Activated naive CD4-positive, alpha-beta T cell treated with anti-CD3 and anti-CD28 coated beads for 36 hours (primary cell): ENCODE measurements at regions of chr13 and their contacts with region 1.

Region 1: GRCh38 chr13:112443995-112444860 is 68.1 kb downstream of the SPACA7 start:
- DNase-seq: peak; percentile 78
- H3K4me3 Mint-ChIP-seq: no peak overlapping the region
- H3K27ac Mint-ChIP-seq: no peak overlapping the region
- H3K4me1 Mint-ChIP-seq: no peaks in the 10 kb centered on the region
- H3K27me3 Mint-ChIP-seq: peaks cover 17% of the 10 kb centered on the region

Region 2: GRCh38 chr13:110894097-110894496 is 1550.1 kb before region 1 on chr13:
- CTCF ChIA-PET with region 1: no interaction called
- intact Hi-C with region 1: no loop called
- DNase-seq: no peak
- H3K4me3 Mint-ChIP-seq: no peak overlapping the region
- H3K27ac Mint-ChIP-seq: no peak overlapping the region
- H3K4me1 Mint-ChIP-seq: no peaks in the 10 kb centered on the region
- H3K27me3 Mint-ChIP-seq: no peaks in the 10 kb centered on the region

Region 3: DNA sequence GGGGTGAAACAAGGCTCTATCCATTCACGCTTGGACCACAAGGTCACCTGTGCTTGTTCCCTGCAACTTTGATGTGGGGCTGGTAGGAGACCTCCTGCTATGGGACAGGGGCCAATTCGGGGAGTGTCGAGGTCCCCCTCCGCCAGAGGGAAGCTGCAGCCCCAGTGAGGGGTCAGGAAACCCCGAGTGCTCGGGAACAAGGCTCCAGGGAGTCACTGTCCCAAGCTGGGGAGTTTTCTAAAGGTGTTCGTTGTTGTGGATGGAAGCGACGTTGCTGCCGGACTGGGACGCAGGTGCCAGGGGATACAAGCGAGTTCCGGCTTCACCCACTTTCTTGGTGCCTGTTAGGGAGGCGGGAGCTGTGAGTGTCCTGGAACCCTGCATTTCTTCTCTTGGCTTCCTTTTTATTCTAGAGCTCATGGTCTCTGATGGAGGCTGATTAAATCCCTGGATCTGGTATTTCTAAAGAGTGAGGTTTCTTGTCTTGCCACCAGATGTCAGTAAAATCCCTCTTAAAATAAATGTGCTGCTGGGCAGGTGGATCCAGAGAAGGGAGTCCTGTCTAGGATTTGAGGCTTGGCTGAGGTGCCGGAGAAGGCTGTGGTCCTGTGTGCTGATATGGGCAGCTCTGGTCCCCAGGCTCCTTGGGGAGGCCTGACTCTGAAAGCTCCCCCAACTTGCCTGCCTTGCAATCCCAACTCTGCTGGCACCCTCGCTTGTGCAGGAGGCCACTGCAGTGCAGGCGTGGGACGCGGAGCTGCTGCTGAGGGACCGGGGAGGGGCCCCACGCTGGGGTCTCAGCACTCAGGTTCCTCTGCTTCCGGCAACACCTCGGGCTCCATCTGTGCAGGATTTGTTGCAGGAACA is 969.9 kb before region 1 on chr13:
- CTCF ChIA-PET with region 1: interaction called, 8 read pairs
- intact Hi-C with region 1: loop called (anchors 1 kb)
- DNase-seq: no peak
- H3K4me3 Mint-ChIP-seq: no peak overlapping the region
- H3K27ac Mint-ChIP-seq: no peak overlapping the region
- H3K4me1 Mint-ChIP-seq: no peaks in the 10 kb centered on the region
- H3K27me3 Mint-ChIP-seq: no peaks in the 10 kb centered on the region

Region 4: DNA sequence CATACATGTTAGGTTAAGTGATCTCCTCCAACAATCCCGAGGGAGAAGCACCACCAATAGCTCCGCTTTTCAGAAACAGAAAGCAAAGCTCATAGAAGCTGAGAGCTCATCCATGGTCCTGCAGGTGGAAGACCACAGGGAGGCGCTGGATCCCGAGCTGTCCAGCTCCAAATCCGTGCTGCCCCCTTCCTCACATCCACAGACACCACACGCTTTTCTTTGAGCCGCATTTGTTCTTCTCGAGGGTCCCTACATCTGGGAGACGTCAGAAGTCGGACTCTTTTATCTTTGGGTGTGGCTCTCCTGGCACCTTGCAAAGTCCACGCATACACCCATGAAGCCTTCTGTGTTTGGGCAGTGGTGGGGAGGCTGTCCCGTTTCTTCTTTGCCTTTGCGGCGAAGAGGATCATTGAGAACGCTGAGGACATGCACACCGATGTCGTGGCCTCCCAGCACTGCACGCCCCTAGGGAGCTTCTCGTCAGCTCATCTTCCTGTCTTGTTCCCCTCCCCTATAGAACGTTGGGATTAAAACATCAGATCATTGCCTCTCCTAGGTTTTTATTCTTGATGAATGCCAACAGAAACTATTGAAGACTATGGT is 939.0 kb before region 1 on chr13:
- CTCF ChIA-PET with region 1: no interaction called
- intact Hi-C with region 1: loop called (anchors 1 kb)
- DNase-seq: no peak
- H3K4me3 Mint-ChIP-seq: no peak overlapping the region
- H3K27ac Mint-ChIP-seq: no peak overlapping the region
- H3K4me1 Mint-ChIP-seq: no peaks in the 10 kb centered on the region
- H3K27me3 Mint-ChIP-seq: peaks cover 19% of the 10 kb centered on the region

Region 5: DNA sequence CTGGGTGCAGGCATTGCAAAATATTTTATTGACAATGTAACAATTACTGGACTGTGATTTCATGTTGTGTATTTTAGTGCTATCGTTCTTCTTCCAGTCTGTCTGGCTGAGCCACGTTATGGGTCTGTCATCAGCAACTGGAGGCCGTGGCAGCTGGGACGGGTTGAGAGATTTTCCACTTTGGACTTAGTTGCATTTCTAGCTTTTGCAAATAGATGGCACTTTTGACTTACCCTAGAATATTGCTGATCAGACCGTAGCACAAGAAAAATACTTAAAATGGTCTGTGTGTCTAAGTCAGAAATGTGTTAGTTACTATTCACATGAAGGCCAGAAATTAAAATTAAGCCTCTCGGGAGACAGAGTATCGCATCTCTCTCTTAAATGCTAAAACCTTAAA is 912.7 kb before region 1 on chr13:
- CTCF ChIA-PET with region 1: no interaction called
- intact Hi-C with region 1: loop called (anchors 1 kb)
- DNase-seq: no peak
- H3K4me3 Mint-ChIP-seq: no peak overlapping the region
- H3K27ac Mint-ChIP-seq: no peak overlapping the region
- H3K4me1 Mint-ChIP-seq: peaks cover 7% of the 10 kb centered on the region
- H3K27me3 Mint-ChIP-seq: peaks cover 46% of the 10 kb centered on the region

Region 6: DNA sequence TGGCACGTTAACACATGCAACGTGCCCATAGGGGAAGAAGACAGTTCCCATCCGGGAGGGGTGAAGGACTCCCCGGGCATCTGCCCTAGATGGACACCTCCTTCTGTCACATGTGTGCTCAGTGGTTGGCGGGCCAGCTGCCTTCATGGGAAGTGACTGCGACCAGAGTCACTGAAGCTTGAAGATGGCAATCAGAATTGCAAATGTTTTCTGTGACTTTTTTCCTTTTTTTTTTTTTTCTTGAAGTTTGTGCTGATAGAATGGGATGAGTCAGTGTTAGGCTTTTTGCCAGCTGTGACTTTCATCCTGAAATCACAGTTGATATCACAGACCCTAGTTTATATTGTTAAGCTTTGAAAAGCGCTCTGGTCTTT is 415.6 kb after region 1 on chr13:
- CTCF ChIA-PET with region 1: no interaction called
- intact Hi-C with region 1: no loop called
- DNase-seq: no peak
- H3K4me3 Mint-ChIP-seq: no peak overlapping the region
- H3K27ac Mint-ChIP-seq: no peak overlapping the region
- H3K4me1 Mint-ChIP-seq: no peaks in the 10 kb centered on the region
- H3K27me3 Mint-ChIP-seq: no peaks in the 10 kb centered on the region